Left cardiac atrium (tissue), 4 donors: ENCODE measurements at regions of chr22 and their contacts with region 1.

Region 1: DNA sequence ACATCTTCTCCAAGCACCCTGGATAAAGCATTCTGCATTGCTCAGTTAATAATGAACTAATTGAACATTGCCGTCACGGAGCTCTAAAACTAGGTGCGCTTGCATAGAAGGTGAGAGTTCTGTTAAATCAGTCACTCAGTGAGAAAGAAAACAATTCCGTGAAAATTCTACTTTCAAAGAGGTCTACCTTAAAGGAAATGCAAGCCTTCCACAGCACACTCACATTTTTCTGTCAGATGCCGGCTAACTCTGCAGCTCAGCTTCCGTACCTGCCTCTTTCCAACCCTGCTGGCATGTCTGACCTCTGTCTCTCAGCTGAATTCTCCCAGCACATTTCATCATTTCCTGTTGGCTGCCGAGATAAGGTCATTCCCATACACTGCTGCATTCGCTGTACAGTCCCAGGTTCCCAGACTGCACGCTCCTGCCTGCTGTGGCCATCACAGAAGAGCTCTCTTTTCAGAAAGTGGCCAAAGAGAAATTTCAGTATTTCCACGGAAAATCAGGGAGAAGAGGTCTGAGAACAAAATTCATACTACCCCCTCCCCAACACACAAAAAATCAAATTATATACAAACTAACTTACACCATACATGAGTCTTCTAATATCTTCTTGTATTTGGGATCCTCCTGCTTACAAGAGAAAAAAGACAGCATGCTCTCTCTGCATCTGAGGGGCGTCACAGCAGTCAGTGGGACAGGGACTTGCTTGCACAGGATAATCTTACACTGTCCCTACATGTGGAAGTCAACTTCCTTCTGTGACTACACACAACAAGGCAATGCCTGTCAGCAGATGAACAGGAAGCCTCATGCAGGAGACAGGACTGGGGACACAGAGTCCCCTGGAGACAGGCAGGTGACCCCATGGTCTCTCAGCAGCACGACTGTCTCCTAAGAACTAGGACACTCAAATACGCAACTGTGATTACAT is 55.1 kb downstream of the PACSIN2 start:
- DNase-seq: peak; percentile 74
- ATAC-seq: peak; percentile 88 to 91

Region 2: DNA sequence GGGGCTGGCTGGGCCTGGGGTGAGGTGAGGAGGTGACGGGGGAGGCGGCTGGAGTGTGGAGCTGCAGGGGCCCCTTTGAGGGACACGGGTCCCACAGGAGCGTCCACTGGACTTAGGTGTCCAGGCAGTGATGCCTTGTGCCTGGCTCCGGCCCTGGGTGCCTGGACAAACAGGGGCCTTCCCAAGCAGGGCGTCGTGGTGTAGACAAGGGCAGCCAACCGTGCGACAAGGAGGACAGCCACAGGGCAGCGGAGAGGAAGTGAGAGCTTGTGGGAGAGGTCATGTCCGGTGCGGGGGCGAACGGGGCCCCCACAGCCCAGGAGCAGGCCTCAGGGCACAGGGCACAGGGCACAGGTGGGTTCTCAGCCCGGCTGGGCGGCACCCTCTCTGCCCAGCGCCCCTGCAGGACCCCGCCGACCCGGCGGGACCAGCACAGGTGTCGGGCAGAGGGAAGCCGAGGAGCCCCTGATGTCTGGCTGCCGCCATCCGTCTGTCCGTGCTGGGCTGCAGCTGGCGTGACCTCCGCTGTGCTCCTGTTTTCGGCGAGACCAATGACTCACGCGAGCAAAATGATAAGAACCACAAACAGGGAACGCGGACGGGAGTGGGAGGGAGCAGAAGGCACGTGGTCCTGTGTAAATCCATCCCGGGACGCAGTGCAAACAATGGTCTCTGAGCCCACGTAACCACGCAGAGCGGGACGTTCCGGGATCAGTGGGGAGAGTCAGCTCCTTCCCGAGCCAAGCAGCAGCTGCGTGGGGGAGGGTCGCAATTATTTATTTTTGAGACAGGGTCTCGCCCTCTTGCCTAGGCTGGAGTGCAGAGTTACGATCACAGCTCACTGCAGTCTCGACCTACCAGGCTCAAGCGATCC is 190.0 kb before region 1 on chr22:
- intact Hi-C with region 1: no loop called
- DNase-seq: peak; percentile 85
- ATAC-seq: peak; percentile 53 to 86

Region 3: DNA sequence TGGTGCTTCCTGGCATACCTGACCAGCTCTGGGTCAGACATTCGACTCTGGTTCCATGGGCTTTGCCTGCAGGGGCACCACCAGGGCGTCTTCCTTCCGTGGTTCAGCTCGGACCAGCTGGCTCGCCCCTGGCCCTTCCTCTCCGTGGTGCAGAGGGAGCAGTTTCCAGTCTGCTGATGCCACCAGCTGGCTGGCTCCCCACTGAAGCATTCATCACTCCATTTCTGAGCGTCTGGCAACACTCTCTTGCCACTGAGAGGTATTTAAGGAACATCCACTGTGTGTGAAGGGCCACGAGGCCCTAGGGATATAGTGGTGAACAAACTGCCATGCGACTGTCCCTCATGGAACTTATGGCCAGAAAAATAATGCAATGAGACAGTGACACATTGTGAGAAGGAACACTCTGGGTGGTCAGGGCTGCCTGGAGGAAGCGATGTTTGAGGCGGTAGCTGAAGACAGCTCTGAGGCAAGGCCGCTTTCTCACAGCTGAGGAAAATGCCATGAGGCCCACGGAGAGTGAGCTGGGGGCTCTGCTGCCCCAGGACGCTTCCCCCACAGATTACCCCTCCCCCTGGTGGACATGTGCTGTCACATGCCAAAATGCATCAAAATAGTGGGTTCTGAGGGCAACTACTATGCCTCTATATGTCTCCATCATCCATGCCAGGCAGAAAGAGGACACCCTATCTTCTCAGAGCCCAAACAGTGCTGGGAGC is 57.9 kb before region 1 on chr22:
- intact Hi-C with region 1: loop called in 1 of 2 experiments (anchors 10 kb)
- DNase-seq: no peak
- ATAC-seq: peak; percentile 57 to 71

Region 4: GRCh38 chr22:42919199-42919598 is 40.6 kb before region 1 on chr22:
- intact Hi-C with region 1: loop called in 1 of 2 experiments (anchors 10 kb)
- DNase-seq: no peak
- ATAC-seq: peak; percentile 48 to 67

Region 5: DNA sequence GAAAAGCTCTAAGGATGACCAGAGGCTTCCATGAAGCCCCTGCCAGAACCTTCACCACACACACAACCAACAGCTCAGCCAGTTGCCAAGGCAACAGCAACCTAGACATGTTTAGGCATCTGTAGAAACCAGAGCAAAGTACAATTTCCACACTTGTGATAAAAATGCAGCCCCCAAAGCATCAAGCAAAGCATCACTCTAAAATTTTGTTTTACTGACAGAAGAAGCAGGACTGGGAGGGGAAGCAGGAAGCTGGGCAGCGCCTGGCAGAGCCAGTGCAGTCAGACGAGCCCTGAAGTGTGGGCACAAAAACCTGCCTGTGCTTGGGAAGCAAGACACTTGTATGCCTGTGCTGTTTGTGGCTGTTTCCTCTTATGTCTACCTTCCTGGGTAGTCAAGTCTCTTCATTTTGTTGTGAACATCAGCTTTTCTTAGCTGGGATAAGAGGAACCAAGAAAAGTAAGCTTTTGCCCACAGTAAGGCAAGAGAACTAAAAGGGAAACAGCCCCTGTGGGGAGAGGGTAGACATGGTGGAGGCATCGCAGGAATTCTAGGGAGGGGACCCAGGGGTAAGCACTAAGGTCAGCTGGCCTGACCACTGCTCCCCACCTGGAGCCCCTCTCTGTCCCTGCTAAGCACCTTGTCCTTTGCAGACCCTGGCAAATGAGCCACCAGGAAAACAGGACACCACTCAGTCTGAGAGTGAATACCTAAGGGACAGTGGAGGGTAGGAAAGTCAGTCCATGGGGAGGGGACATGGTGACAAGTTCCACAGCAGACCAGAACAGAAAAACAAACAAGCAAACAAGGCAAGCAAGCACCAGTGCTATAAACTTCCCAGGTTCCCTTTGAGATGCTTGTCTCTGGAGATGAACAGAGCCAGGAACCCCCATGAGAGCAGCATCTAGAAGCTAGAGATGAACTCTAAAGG is 41.7 kb after region 1 on chr22:
- intact Hi-C with region 1: loop called in 1 of 2 experiments (anchors 5 kb)
- DNase-seq: no peak
- ATAC-seq: peak; percentile 25 to 43

Region 6: DNA sequence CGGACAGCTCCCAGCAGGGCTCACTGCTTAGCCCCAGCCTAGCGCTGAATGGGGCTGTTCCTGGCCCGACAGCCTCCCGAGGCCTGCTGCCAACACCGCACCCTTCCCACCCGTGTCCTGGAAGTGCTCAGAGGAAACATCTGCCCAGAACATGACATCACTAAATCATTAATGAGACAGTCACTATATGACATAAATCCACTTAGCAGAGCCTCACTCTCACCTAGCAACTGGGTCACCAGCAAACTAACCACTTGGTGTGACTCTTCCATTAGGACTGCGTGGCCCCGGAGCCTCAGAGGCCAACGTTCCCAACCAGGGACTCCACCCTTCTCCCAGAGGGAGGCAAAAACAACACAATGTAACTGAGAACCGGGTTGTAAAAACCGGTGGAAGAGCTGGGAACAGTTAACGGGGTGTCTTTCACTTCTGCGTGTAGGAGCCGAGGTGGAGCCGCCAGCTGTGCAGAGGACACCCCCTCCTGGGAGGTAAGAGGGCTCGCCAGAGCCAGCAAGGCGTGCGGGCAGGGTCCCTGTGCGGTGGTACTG is 76.5 kb after region 1 on chr22:
- intact Hi-C with region 1: no loop called
- DNase-seq: peak; percentile 83
- ATAC-seq: peak; percentile 83 to 88

Region 7: DNA sequence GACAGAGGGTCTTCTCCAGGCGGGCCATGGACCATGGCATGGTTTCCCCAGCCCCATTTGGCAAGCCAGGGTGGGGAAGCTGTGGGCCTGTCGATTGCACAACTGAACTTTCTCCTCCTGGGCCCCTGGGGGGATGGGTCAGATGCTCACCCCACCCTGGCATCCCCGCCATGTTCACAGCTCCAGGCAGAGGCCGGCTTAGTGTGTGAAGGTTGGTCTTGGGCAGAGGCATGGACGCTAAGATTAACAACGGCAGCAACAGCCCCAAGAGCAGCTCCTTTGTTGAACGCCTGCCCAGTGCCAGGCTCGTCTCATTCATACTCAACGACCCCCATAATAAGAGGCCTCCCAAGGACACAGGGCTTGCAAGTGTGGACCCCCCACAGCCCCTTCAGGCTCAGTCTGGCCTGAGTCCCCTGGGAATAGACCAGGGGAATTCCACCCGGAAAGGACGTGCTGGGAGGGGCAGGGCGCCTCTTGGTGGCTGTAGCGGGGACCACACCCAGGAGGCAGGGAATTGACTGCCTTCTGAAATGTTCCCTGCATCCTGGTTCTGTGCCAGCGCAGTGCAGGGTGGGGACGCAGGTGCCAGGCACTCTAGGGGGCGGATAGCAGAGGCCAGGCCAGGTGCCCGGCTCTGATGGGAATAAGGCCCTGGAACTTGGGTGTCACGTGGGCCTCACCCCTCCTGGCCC is 199.8 kb after region 1 on chr22:
- intact Hi-C with region 1: no loop called
- DNase-seq: no peak
- ATAC-seq: peak in 1 of 2 donors; percentile 20